Activated CD4-positive, alpha-beta T cell treated with anti-CD3 and anti-CD28 coated beads, Interleukin-2, amount 10 ng/mL, durations not matched to agents 24 days and 14 days (primary cell): ENCODE measurements at regions of chr11 and their contacts with region 1.

Region 1: GRCh38 chr11:63738720-63739360 is 29.7 kb downstream of the ZFTA start:
- DNase-seq: peak; percentile 88
- H3K4me3 Mint-ChIP-seq: no peak overlapping the region
- H3K27ac Mint-ChIP-seq: no peak overlapping the region
- H3K4me1 Mint-ChIP-seq: peaks cover 2% of the 10 kb centered on the region
- H3K27me3 Mint-ChIP-seq: no peaks in the 10 kb centered on the region

Region 2: DNA sequence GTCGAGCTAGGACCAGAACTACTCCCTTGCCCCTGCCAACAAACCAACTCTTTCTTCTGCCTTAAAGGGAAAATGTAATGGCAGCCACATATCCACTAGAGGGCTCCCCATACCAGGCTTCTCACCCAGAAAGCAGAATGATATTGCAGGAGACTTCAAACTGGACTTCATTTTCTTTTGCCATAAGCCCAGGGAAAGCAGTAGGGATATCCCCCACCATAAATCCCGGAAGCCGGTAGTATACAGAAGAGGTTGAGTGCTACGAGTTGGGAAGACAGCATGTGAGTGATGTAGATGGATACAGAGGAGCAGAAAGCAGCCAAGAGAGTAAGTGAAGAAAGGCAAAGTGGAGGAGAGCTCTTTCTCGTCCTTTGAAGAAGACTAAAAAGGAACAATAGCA is 259.9 kb before region 1 on chr11:
- intact Hi-C with region 1: loop called (anchors 2 kb)
- DNase-seq: peak; percentile 86
- H3K4me3 Mint-ChIP-seq: no peak overlapping the region
- H3K27ac Mint-ChIP-seq: no peak overlapping the region
- H3K4me1 Mint-ChIP-seq: no peaks in the 10 kb centered on the region
- H3K27me3 Mint-ChIP-seq: peaks cover 41% of the 10 kb centered on the region

Region 3: DNA sequence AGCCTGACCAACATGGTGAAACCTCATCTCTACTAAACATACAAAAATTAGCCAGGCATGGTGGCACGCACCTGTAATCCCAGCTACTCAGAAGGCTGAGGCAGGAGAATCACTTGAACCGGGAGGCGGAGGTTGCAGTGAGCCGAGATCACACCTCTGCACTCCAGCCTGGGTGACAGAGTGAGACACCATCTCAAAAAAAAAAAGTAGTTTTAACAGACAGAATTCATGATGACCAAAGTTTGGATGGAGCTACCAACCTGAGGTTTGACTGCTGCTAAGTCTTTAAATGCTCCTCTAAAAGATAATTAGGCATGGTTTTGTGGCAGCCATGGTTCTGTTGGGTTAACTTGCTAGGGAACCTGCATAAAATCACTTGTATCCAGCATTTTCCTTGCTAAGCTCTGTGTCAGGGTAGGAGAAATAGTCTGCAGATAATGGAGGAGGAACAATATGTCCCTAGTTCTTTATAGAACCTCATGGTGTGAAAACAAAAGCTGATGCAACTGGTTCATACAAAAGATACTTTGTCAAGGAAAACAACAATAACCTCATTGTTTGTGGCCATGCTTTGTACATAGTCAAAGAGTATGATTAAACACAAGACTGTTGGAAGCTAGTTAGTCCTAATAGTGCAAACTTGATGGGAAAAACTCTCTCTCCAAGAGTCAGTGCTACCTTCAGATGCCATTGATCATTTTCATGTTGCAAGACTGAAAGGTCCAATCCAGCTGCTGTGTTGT is 155.7 kb before region 1 on chr11:
- intact Hi-C with region 1: no loop called
- DNase-seq: no peak
- H3K4me3 Mint-ChIP-seq: no peak overlapping the region
- H3K27ac Mint-ChIP-seq: no peak overlapping the region
- H3K4me1 Mint-ChIP-seq: peaks cover 15% of the 10 kb centered on the region
- H3K27me3 Mint-ChIP-seq: peaks cover 2% of the 10 kb centered on the region

Region 4: GRCh38 chr11:63671322-63672155 is 67.3 kb before region 1 on chr11 and contains the start of gene ATL3:
- intact Hi-C with region 1: loop called (anchors 1 kb)
- DNase-seq: peak; percentile 98
- H3K4me3 Mint-ChIP-seq: peak within 1 kb of the TSS; percentile 82
- H3K27ac Mint-ChIP-seq: peak within 1 kb of the TSS; percentile 88
- H3K4me1 Mint-ChIP-seq: peaks cover 27% of the 10 kb centered on the region
- H3K27me3 Mint-ChIP-seq: no peaks in the 10 kb centered on the region
- total RNA-seq, gene ATL3: 38.5 and 39.5 TPM in 2 replicates

Region 5: DNA sequence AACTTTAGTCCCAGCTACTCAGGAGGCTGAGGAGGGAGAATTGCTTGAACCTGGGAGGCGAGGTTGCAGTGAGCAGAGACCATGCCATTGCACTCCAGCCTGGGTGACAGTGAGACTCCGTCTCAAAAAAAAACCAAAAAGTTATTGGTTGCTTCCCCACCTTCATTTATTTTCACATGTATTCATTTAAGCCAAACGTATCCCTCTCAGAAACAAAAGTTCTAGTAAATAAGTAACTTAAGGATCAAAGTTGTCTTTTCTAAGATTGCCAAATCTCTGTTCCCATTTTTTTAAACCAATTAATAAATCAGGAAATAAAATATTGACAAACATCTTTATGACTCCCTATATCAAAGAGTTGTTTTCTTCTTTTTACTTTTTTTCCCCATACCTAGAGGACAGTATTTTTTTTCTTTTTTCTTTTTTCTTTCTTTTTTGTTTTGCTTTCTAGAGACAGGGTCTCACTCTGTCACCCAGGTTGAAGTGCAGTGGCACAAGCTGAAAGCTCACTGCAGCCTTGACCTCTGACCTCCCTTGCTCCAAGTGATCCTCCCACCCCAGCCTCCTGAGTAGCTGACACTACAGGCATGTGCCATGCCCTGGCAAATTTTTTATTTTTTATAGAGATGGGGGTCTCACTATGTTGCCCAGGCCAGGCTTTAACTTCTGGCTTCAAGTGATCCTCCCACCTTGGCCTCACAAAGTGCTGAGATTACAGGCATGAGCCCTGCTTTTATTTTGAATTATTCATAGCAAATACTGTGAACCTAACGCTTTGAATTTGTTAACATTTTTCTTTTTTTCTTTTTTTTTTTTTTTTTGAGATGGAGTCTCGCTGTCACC is 18.3 kb after region 1 on chr11:
- intact Hi-C with region 1: no loop called
- DNase-seq: no peak
- H3K4me3 Mint-ChIP-seq: no peak overlapping the region
- H3K27ac Mint-ChIP-seq: no peak overlapping the region
- H3K4me1 Mint-ChIP-seq: no peaks in the 10 kb centered on the region
- H3K27me3 Mint-ChIP-seq: no peaks in the 10 kb centered on the region